ENCODE measurements at regions of chr1 and their contacts with region 1.

Region 1: GRCh38 chr1:232891071-232891470 is 59.3 kb upstream of the NTPCR start:
- DNase-seq: no peak
- ATAC-seq: peak; percentile 75
- H3K4me3 Mint-ChIP-seq: no peak overlapping the region
- H3K27ac Mint-ChIP-seq: no peak overlapping the region
- H3K4me1 Mint-ChIP-seq: peaks cover 9% of the 10 kb centered on the region
- H3K27me3 Mint-ChIP-seq: no peaks in the 10 kb centered on the region

Region 2: DNA sequence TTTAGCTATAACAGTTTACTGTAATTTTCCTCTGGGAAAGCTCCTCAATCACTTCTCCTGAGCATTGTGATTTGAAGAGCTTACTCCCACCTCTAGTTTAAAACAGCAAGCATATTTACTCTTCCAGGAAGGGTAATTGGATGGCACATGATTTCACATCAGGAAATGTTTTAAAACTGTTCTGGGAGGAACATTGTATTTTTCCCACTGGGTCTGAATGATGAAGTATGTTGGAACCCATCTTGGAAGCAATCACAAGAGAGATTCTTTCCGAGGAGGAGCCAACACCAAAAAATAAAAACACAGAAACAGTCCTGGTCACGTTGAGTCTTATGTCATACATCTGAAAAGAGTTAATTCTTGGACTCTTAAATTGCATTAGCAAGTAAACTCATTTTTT is 68.5 kb before region 1 on chr1:
- CTCF ChIA-PET with region 1: no interaction called
- POLR2A ChIA-PET with region 1: no interaction called
- intact Hi-C with region 1: no loop called
- DNase-seq: no peak
- ATAC-seq: no peak
- H3K4me3 Mint-ChIP-seq: no peak overlapping the region
- H3K27ac Mint-ChIP-seq: no peak overlapping the region
- H3K4me1 Mint-ChIP-seq: no peaks in the 10 kb centered on the region
- H3K27me3 Mint-ChIP-seq: peaks cover 2% of the 10 kb centered on the region

Region 3: GRCh38 chr1:232880354-232880753 is 10.7 kb before region 1 on chr1:
- CTCF ChIA-PET with region 1: interaction called, 12 read pairs
- POLR2A ChIA-PET with region 1: no interaction called
- intact Hi-C with region 1: no loop called
- DNase-seq: peak; percentile 41
- ATAC-seq: no peak
- H3K4me3 Mint-ChIP-seq: no peak overlapping the region
- H3K27ac Mint-ChIP-seq: no peak overlapping the region
- H3K4me1 Mint-ChIP-seq: peaks cover 8% of the 10 kb centered on the region
- H3K27me3 Mint-ChIP-seq: no peaks in the 10 kb centered on the region

Region 4: DNA sequence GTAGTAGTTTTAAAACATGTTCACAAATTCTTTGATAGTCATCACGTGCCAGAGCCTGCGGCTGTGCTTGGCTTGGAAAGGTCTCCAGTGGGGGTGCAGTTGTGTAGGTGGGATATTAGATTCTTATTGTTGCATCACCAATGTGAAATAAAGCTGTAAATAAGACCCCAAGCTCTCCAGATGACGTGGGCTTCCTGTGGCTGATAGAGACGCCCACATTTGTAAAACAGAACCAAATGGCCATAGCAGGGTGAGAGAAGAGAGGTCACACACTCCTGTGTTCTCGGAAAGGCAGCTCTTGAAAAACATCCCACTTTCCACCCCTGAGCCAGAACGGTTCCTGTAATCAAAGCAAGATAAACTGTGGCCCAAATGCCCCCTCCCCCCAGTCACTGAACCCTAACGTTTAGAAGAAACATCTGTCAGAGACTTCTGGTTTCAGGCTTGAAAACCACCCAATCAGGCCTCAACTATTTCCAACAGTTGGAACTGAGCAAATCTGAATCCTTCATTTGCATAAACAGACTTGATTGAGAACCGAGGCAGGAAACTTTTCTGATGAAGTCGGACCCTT is 52.7 kb after region 1 on chr1:
- CTCF ChIA-PET with region 1: no interaction called
- POLR2A ChIA-PET with region 1: no interaction called
- intact Hi-C with region 1: no loop called
- DNase-seq: peak; percentile 57
- ATAC-seq: peak; percentile 80
- H3K4me3 Mint-ChIP-seq: no peak overlapping the region
- H3K27ac Mint-ChIP-seq: peak overlapping the region; percentile 84
- H3K4me1 Mint-ChIP-seq: peaks cover 23% of the 10 kb centered on the region
- H3K27me3 Mint-ChIP-seq: peaks cover 2% of the 10 kb centered on the region